CD14-positive monocyte (primary cell): ENCODE measurements at regions of chr11 and their contacts with region 1.

Region 1: DNA sequence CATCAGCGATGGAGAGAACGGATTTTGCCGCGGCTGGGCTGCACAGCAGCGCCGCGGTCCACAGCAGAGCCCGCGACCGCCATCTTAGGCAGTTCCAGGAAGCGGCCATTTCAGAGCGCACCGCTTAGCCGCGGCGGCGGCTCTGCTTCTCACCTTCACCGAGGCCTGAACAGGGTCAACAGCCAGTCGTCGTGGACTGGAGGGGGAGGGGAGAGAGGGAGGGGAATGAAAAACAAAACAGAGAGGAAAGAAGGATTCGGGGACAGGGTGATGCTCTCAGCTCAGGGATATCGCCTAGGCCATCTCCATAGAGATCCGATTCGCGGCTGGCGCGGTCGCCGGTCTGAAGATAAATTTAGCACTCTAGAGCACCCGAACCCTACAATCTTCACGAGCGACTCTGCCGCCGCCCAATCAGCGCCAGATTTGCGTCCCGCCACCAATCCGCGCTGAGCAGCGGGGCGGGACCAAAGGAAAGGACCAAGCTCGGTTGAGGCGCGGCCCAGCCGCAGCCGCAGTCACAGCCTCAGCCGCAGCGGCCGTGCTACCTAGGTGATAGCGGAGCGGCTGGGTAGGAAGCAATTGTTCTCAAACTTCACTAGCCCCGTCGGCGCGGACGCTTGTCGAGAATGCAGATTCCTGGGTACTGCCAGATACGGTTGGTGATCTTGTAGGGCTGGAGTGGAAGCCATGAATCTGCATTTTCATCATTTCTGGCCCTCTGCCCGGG is at the start of gene ZBED5:
- DNase-seq: peak; percentile 93 to 96 (median 94)
- H3K4me3 ChIP-seq: peak within 1 kb of the TSS; percentile 78 to 91 (median 91)
- H3K4me3 Mint-ChIP-seq: peak within 1 kb of the TSS; percentile 98 to 100
- H3K27ac ChIP-seq: peak within 1 kb of the TSS; percentile 94 to 95
- H3K27ac Mint-ChIP-seq: peak within 1 kb of the TSS; percentile 99 to 100 (median 99)
- H3K4me1 ChIP-seq: peaks cover 20 to 30% of the 10 kb centered on the region in 2 donors
- H3K4me1 Mint-ChIP-seq: peaks cover 21% of the 10 kb centered on the region
- H3K27me3 ChIP-seq: no peaks in the 10 kb centered on the region
- H3K27me3 Mint-ChIP-seq: peaks cover 0 to 3% (median 0%) of the 10 kb centered on the region in 3 donors
- CTCF ChIP-seq: no peak
- polyA plus RNA-seq, gene ZBED5: 8.1 to 45.8 (median 10.3) TPM

Region 2: GRCh38 chr11:10302744-10303557 is 554.9 kb before region 1 on chr11:
- intact Hi-C with region 1: no loop called
- DNase-seq: peak; percentile 87 to 91 (median 89)
- H3K4me3 ChIP-seq: peak overlapping the region; percentile 79 to 97 (median 89)
- H3K4me3 Mint-ChIP-seq: peak overlapping the region; percentile 96 to 99
- H3K27ac ChIP-seq: peak overlapping the region; percentile 91 to 100
- H3K27ac Mint-ChIP-seq: peak overlapping the region; percentile 96 to 100 (median 99)
- H3K4me1 ChIP-seq: peaks cover 45 to 48% of the 10 kb centered on the region in 2 donors
- H3K4me1 Mint-ChIP-seq: peaks cover 50% of the 10 kb centered on the region
- H3K27me3 ChIP-seq: peaks cover 0 to 16% of the 10 kb centered on the region in 2 donors
- H3K27me3 Mint-ChIP-seq: peaks cover 12 to 21% (median 13%) of the 10 kb centered on the region in 3 donors
- CTCF ChIP-seq: no peak

Region 3: GRCh38 chr11:10462746-10463300 is 395.1 kb before region 1 on chr11:
- intact Hi-C with region 1: no loop called
- DNase-seq: no peak
- H3K4me3 ChIP-seq: no peak overlapping the region
- H3K4me3 Mint-ChIP-seq: no peak overlapping the region
- H3K27ac ChIP-seq: no peak overlapping the region
- H3K27ac Mint-ChIP-seq: no peak overlapping the region
- H3K4me1 ChIP-seq: peaks cover 28 to 29% of the 10 kb centered on the region in 2 donors
- H3K4me1 Mint-ChIP-seq: peaks cover 29% of the 10 kb centered on the region
- H3K27me3 ChIP-seq: no peaks in the 10 kb centered on the region
- H3K27me3 Mint-ChIP-seq: peaks cover 0 to 2% (median 1%) of the 10 kb centered on the region in 3 donors
- CTCF ChIP-seq: no peak

Region 4: GRCh38 chr11:10899121-10899830 is 41.4 kb after region 1 on chr11:
- intact Hi-C with region 1: loop called (anchors 2 to 5 kb)
- DNase-seq: peak; percentile 54 to 86 (median 71)
- H3K4me3 ChIP-seq: peak overlapping the region in 1 of 3 experiments; percentile 28
- H3K4me3 Mint-ChIP-seq: peak overlapping the region; percentile 41 to 46
- H3K27ac ChIP-seq: peak overlapping the region; percentile 89 to 100
- H3K27ac Mint-ChIP-seq: peak overlapping the region; percentile 99 to 100 (median 99)
- H3K4me1 ChIP-seq: peaks cover 57 to 65% of the 10 kb centered on the region in 2 donors
- H3K4me1 Mint-ChIP-seq: peaks cover 61% of the 10 kb centered on the region
- H3K27me3 ChIP-seq: no peaks in the 10 kb centered on the region
- H3K27me3 Mint-ChIP-seq: peaks cover 0 to 7% (median 2%) of the 10 kb centered on the region in 3 donors
- CTCF ChIP-seq: no peak